Spleen (tissue), 13 donors: ENCODE measurements at regions of chr2 and their contacts with region 1.

Region 1: DNA sequence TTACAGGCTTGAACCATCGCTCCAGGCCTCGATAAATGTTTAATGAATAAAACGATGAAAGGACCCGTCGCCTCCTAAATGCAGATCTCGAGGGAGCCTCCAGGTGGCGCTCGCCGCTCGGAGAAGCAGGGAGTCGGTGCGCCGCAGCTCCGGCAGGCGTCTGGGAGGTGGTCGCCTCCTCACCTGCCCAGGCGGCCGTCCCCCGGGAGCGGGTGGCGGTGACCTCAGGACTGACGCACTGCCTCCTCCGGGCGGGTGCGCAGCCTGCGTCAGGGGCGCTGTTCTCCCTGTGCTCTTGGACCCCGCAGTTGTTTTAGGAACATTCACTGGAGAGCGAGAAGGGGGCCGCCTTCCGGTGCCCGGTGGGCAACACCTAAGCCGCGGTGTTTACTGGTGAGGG is 38.6 kb upstream of the POLE4 start:
- DNase-seq: peak; percentile 93
- H3K4me3 ChIP-seq: peak overlapping the region in 4 of 8 donors; percentile 9 to 59 (median 34)
- H3K27ac ChIP-seq: no peak overlapping the region
- H3K4me1 ChIP-seq: peaks cover 0 to 31% (median 22%) of the 10 kb centered on the region in 6 donors
- H3K27me3 ChIP-seq: peaks cover 0 to 52% (median 3%) of the 10 kb centered on the region in 7 donors
- CTCF ChIP-seq: peak; percentile 65 to 93 (median 88)
- POLR2A ChIP-seq: no peak

Region 2: GRCh38 chr2:74975016-74975415 is 55.2 kb after region 1 on chr2:
- intact Hi-C with region 1: no loop called
- DNase-seq: no peak
- H3K4me3 ChIP-seq: no peak overlapping the region
- H3K27ac ChIP-seq: no peak overlapping the region
- H3K4me1 ChIP-seq: peaks cover 0 to 6% (median 3%) of the 10 kb centered on the region in 6 donors
- H3K27me3 ChIP-seq: no peaks in the 10 kb centered on the region
- CTCF ChIP-seq: no peak
- POLR2A ChIP-seq: no peak

Region 3: DNA sequence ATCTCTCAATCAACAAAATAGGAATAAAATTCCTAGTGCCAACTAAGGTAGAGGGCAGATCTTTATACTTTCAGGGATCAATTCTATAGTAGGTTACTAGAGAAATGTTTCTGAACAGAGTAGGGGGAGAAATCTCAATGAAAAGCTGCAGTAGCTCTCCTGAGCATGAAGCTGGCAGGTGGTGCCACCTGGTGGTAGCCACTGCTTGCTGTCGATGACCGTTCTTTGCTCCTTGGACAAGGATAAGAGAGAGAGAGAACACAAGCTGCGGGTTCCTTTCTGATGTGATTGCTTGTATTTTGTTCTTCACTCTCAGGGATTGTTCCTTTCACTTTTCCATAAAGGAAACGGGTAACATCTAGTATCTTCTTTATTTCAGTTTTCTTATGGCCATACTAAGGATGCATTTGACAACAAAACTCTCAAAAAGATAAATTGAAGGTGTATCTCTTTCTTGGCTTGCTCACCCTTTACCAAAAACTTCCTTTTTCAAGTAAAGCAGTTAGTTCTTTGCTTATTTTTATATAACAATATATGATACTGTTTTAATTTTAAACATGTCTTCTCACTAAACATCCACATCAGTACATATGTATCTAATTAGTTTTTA is 708.2 kb after region 1 on chr2:
- intact Hi-C with region 1: loop called (anchors 10 kb)
- DNase-seq: peak; percentile 86
- H3K4me3 ChIP-seq: no peak overlapping the region
- H3K27ac ChIP-seq: no peak overlapping the region
- H3K4me1 ChIP-seq: peaks cover 0 to 9% (median 2%) of the 10 kb centered on the region in 6 donors
- H3K27me3 ChIP-seq: peaks cover 0 to 12% (median 0%) of the 10 kb centered on the region in 7 donors
- CTCF ChIP-seq: peak; percentile 23 to 88 (median 68)
- POLR2A ChIP-seq: no peak